ENCODE measurements at regions of chr2 and their contacts with region 1.

Region 1: GRCh38 chr2:148874868-148875341 is at the start of gene KIF5C:
- DNase-seq: peak; percentile 67 to 83 (median 76)
- ATAC-seq: peak; percentile 95
- H3K4me3 ChIP-seq: peak within 1 kb of the TSS; percentile 45
- H3K4me3 Mint-ChIP-seq: peak within 1 kb of the TSS; percentile 77 to 89 (median 86)
- H3K27ac ChIP-seq: no peak within 1 kb of the TSS
- H3K27ac Mint-ChIP-seq: peak within 1 kb of the TSS in 6 of 9 donors; percentile 4 to 82 (median 72)
- H3K4me1 ChIP-seq: peaks cover 5 to 6% of the 10 kb centered on the region in 2 donors
- H3K4me1 Mint-ChIP-seq: peaks cover 0 to 19% (median 14%) of the 10 kb centered on the region in 7 donors
- H3K27me3 ChIP-seq: no peaks in the 10 kb centered on the region
- H3K27me3 Mint-ChIP-seq: peaks cover 8 to 33% (median 28%) of the 10 kb centered on the region in 5 donors
- total RNA-seq, gene KIF5C: 3.6 to 14.3 (median 6.8) TPM

Region 2: GRCh38 chr2:147663153-147663961 is 1211.5 kb before region 1 on chr2:
- CTCF ChIA-PET with region 1: no interaction called
- POLR2A ChIA-PET with region 1: no interaction called
- intact Hi-C with region 1: loop called in 1 of 2 experiments (anchors 10 kb)
- DNase-seq: peak in 7 of 9 donors; percentile 10 to 75 (median 58)
- ATAC-seq: peak; percentile 91
- H3K4me3 ChIP-seq: peak overlapping the region; percentile 48
- H3K4me3 Mint-ChIP-seq: peak overlapping the region; percentile 61 to 87 (median 82)
- H3K27ac ChIP-seq: peak overlapping the region; percentile 68
- H3K27ac Mint-ChIP-seq: peak overlapping the region; percentile 87 to 100 (median 93)
- H3K4me1 ChIP-seq: peaks cover 7 to 23% of the 10 kb centered on the region in 2 donors
- H3K4me1 Mint-ChIP-seq: peaks cover 17 to 59% (median 46%) of the 10 kb centered on the region in 7 donors
- H3K27me3 ChIP-seq: no peaks in the 10 kb centered on the region
- H3K27me3 Mint-ChIP-seq: no peaks in the 10 kb centered on the region

Region 3: GRCh38 chr2:148764815-148765214 is 110.1 kb before region 1 on chr2:
- CTCF ChIA-PET with region 1: no interaction called
- POLR2A ChIA-PET with region 1: no interaction called
- intact Hi-C with region 1: loop called in 1 of 2 experiments (anchors 5 kb)
- DNase-seq: peak in 7 of 9 donors; percentile 33 to 64 (median 47)
- ATAC-seq: peak; percentile 92
- H3K4me3 ChIP-seq: no peak overlapping the region
- H3K4me3 Mint-ChIP-seq: peak overlapping the region in 7 of 10 donors; percentile 37 to 73 (median 64)
- H3K27ac ChIP-seq: no peak overlapping the region
- H3K27ac Mint-ChIP-seq: peak overlapping the region in 5 of 9 donors; percentile 26 to 72 (median 57)
- H3K4me1 ChIP-seq: peaks cover 0 to 12% of the 10 kb centered on the region in 2 donors
- H3K4me1 Mint-ChIP-seq: peaks cover 6 to 70% (median 53%) of the 10 kb centered on the region in 7 donors
- H3K27me3 ChIP-seq: no peaks in the 10 kb centered on the region
- H3K27me3 Mint-ChIP-seq: no peaks in the 10 kb centered on the region

Region 4: DNA sequence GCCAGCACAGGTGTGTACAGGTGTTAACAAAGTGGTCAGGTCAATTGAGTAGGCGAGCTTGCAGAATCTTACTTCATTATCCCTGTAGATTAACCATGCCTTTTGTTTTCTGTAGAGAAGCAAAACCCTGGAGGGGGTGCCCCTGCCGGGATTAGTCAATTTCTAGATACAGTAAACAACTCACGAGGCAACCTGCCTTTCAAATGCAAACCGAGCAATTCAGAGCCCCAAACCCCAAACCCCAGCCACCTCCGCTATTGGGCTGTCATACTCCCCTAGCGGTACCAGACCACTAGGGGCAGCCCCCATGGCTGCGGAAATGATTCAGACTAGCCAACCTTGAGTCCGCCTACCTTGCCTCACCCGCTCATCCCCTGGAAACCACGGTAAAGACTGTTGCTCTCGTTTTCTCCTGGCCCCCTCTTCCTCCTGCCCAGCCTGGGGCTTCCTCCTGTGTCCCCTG is 61.3 kb before region 1 on chr2:
- CTCF ChIA-PET with region 1: no interaction called
- POLR2A ChIA-PET with region 1: no interaction called
- intact Hi-C with region 1: loop called in 1 of 2 experiments (anchors 5 kb)
- DNase-seq: peak in 1 of 9 donors; percentile 71
- ATAC-seq: peak; percentile 84
- H3K4me3 ChIP-seq: no peak overlapping the region
- H3K4me3 Mint-ChIP-seq: no peak overlapping the region
- H3K27ac ChIP-seq: no peak overlapping the region
- H3K27ac Mint-ChIP-seq: no peak overlapping the region
- H3K4me1 ChIP-seq: peaks cover 0 to 7% of the 10 kb centered on the region in 2 donors
- H3K4me1 Mint-ChIP-seq: peaks cover 0 to 19% (median 6%) of the 10 kb centered on the region in 7 donors
- H3K27me3 ChIP-seq: no peaks in the 10 kb centered on the region
- H3K27me3 Mint-ChIP-seq: peaks cover 11 to 29% (median 15%) of the 10 kb centered on the region in 5 donors

Region 5: GRCh38 chr2:148860037-148860436 is 14.9 kb before region 1 on chr2:
- CTCF ChIA-PET with region 1: no interaction called
- POLR2A ChIA-PET with region 1: no interaction called
- intact Hi-C with region 1: no loop called
- DNase-seq: no peak
- ATAC-seq: no peak
- H3K4me3 ChIP-seq: no peak overlapping the region
- H3K4me3 Mint-ChIP-seq: no peak overlapping the region
- H3K27ac ChIP-seq: no peak overlapping the region
- H3K27ac Mint-ChIP-seq: no peak overlapping the region
- H3K4me1 ChIP-seq: no peaks in the 10 kb centered on the region
- H3K4me1 Mint-ChIP-seq: peaks cover 0 to 2% (median 0%) of the 10 kb centered on the region in 7 donors
- H3K27me3 ChIP-seq: no peaks in the 10 kb centered on the region
- H3K27me3 Mint-ChIP-seq: peaks cover 5 to 35% (median 15%) of the 10 kb centered on the region in 5 donors

Region 6: GRCh38 chr2:148926291-148926961 is 51.5 kb after region 1 on chr2:
- CTCF ChIA-PET with region 1: no interaction called
- POLR2A ChIA-PET with region 1: no interaction called
- intact Hi-C with region 1: loop called (anchors 1 to 2 kb)
- DNase-seq: peak; percentile 21 to 60 (median 48)
- ATAC-seq: peak; percentile 89
- H3K4me3 ChIP-seq: peak overlapping the region; percentile 43
- H3K4me3 Mint-ChIP-seq: peak overlapping the region; percentile 77 to 88 (median 84)
- H3K27ac ChIP-seq: no peak overlapping the region
- H3K27ac Mint-ChIP-seq: peak overlapping the region; percentile 29 to 94 (median 83)
- H3K4me1 ChIP-seq: peaks cover 0 to 7% of the 10 kb centered on the region in 2 donors
- H3K4me1 Mint-ChIP-seq: peaks cover 9 to 29% (median 22%) of the 10 kb centered on the region in 7 donors
- H3K27me3 ChIP-seq: no peaks in the 10 kb centered on the region
- H3K27me3 Mint-ChIP-seq: no peaks in the 10 kb centered on the region

Region 7: GRCh38 chr2:149587220-149587949 is 712.5 kb after region 1 on chr2 and contains the start of gene MMADHC:
- CTCF ChIA-PET with region 1: no interaction called
- POLR2A ChIA-PET with region 1: no interaction called
- intact Hi-C with region 1: loop called (anchors 1 to 2 kb)
- DNase-seq: peak; percentile 83 to 93 (median 91)
- ATAC-seq: peak; percentile 98
- H3K4me3 ChIP-seq: peak within 1 kb of the TSS; percentile 97
- H3K4me3 Mint-ChIP-seq: peak within 1 kb of the TSS; percentile 95 to 99 (median 97)
- H3K27ac ChIP-seq: peak within 1 kb of the TSS; percentile 93
- H3K27ac Mint-ChIP-seq: peak within 1 kb of the TSS; percentile 95 to 100 (median 99)
- H3K4me1 ChIP-seq: peaks cover 23 to 39% of the 10 kb centered on the region in 2 donors
- H3K4me1 Mint-ChIP-seq: peaks cover 27 to 58% (median 50%) of the 10 kb centered on the region in 7 donors
- H3K27me3 ChIP-seq: no peaks in the 10 kb centered on the region
- H3K27me3 Mint-ChIP-seq: peaks cover 22 to 30% (median 30%) of the 10 kb centered on the region in 5 donors
- total RNA-seq, gene MMADHC: 53.3 to 93.4 (median 66.6) TPM

Measured in naive thymus-derived CD4-positive, alpha-beta T cell (primary cell).